ENCODE measurements at regions of chr5 and their contacts with region 1.

Region 1: DNA sequence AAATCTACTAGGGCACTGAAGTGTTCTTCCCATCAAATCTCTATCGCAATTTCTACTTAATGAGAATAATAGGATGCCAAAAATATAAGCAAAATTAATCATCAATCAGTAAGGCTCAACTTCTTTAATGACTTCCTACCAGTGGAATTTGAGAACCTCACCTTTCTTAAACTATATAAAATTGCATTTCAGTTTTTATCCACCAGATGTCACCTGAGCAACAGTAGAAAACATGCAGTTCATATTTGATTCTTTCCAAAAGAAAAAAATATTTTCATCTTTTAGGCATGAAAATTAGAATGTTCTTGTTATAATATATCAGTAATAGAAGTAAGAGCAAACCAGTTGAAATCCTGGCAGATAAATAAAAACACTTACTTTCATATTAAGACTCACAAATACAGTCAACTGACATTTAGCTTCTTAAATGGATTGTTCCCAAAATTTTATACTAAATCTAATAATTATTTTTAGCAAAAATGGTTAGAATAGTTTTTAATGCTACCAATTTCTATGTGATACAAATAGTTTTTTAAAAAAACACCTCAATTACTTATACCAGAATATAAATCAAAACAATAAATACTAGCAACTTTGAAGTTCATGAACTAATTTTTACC is 13.4 kb upstream of the CCDC112 start:
- DNase-seq: peak; percentile 61
- H3K4me3 ChIP-seq: no peak overlapping the region
- H3K27ac ChIP-seq: no peak overlapping the region
- H3K4me1 ChIP-seq: no peaks in the 10 kb centered on the region
- H3K27me3 ChIP-seq: no peaks in the 10 kb centered on the region

Region 2: GRCh38 chr5:115398719-115399118 is 88.9 kb after region 1 on chr5:
- in situ Hi-C with region 1: no loop called
- DNase-seq: peak; percentile 90
- H3K4me3 ChIP-seq: no peak overlapping the region
- H3K27ac ChIP-seq: no peak overlapping the region; the same call in 1 of the 2 replicates
- H3K4me1 ChIP-seq: peaks cover 26% of the 10 kb centered on the region
- H3K27me3 ChIP-seq: no peaks in the 10 kb centered on the region

Region 3: DNA sequence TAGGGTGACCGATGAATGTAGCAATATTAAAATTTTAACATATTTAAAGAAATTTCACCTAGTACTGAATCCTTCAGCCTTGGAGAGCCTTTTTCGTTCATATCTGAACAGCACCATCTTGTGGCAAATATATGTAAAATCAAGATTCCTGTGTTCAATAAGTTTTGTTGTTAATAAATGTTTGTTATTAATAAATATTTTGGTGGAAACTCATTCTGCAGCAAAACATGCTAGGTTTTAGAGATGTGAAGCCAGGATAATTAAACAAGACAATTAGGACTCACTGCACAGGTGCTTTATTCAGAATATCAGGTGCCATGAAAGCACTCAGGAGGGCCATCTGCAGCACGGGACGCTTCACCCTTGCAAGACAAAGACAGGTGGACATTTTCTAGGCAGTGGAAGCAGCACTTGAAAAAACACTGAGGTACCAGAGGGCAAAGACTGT is 276.8 kb after region 1 on chr5:
- in situ Hi-C with region 1: loop called (anchors 10 kb)
- DNase-seq: peak; percentile 77
- H3K4me3 ChIP-seq: no peak overlapping the region
- H3K27ac ChIP-seq: no peak overlapping the region
- H3K4me1 ChIP-seq: peaks cover 15% of the 10 kb centered on the region
- H3K27me3 ChIP-seq: no peaks in the 10 kb centered on the region

Region 4: GRCh38 chr5:115841382-115842088 is 531.7 kb after region 1 on chr5 and contains the starts of genes AP3S1 and ATG12:
- in situ Hi-C with region 1: loop called (anchors 25 kb)
- DNase-seq: peak; percentile 97
- H3K4me3 ChIP-seq: peak within 1 kb of the TSS; percentile 96
- H3K27ac ChIP-seq: peak within 1 kb of the TSS; percentile 84
- H3K4me1 ChIP-seq: peaks cover 39% of the 10 kb centered on the region
- H3K27me3 ChIP-seq: no peaks in the 10 kb centered on the region
- total RNA-seq, gene AP3S1: 430 and 550 TPM in 2 replicates
- total RNA-seq, gene ATG12: 57.2 and 70.2 TPM in 2 replicates

Region 5: GRCh38 chr5:116068028-116068632 is 758.3 kb after region 1 on chr5:
- in situ Hi-C with region 1: loop called (anchors 25 kb)
- DNase-seq: peak; percentile 75
- H3K4me3 ChIP-seq: no peak overlapping the region
- H3K27ac ChIP-seq: no peak overlapping the region
- H3K4me1 ChIP-seq: no peaks in the 10 kb centered on the region
- H3K27me3 ChIP-seq: no peaks in the 10 kb centered on the region